Calu3 (cell line): ENCODE measurements at regions of chr9 and their contacts with region 1.

Region 1: DNA sequence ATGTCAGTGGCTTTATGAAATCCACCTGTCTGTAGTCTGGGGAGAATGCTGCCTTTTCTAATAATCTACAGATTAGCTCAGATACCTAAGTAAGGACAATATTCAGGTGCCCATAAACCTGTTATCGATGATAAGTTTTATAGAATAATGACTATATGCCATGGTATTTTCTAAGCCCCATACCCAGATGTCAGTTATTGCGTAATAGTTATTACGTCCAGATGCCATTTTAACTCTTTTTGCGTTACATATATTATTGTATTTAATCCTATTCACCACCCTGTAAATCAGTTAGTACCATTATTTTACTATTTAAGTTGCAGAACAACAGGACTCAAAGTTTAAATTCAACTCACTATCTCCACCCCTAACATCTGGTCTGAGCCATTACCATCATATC is 1343.9 kb upstream of the ACO1 start:
- DNase-seq: no peak
- H3K4me3 Mint-ChIP-seq: no peak overlapping the region
- H3K27ac Mint-ChIP-seq: no peak overlapping the region
- H3K4me1 Mint-ChIP-seq: no peaks in the 10 kb centered on the region
- H3K27me3 Mint-ChIP-seq: no peaks in the 10 kb centered on the region
- CTCF ChIP-seq: no peak

Region 2: DNA sequence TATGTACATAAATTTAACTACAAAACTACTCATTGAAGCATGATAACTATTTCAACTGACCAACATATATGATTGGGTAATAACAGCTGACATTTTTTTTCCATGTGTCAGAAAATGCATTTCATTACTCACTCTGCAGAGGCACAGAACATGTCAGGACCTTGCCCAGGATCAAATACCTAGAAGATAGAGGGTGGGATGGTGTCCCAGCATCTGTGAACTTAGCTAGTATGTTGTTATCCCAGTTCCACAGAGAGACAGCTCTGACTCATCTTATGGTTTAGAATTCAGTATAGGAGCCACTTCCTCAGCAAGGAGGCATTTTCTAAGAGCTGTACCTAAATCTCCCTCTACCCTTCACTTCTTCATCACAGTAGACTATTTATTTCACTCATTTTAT is 145.3 kb after region 1 on chr9:
- CTCF ChIA-PET with region 1: no interaction called
- intact Hi-C with region 1: no loop called
- DNase-seq: no peak
- H3K4me3 Mint-ChIP-seq: no peak overlapping the region
- H3K27ac Mint-ChIP-seq: no peak overlapping the region
- H3K4me1 Mint-ChIP-seq: no peaks in the 10 kb centered on the region
- H3K27me3 Mint-ChIP-seq: no peaks in the 10 kb centered on the region
- CTCF ChIP-seq: no peak

Region 3: GRCh38 chr9:31272456-31273295 is 232.1 kb after region 1 on chr9:
- CTCF ChIA-PET with region 1: interaction called, 12 read pairs
- intact Hi-C with region 1: no loop called
- DNase-seq: peak; percentile 44
- H3K4me3 Mint-ChIP-seq: no peak overlapping the region
- H3K27ac Mint-ChIP-seq: peak overlapping the region; percentile 73
- H3K4me1 Mint-ChIP-seq: peaks cover 10% of the 10 kb centered on the region
- H3K27me3 Mint-ChIP-seq: no peaks in the 10 kb centered on the region
- CTCF ChIP-seq: no peak